CD8-positive, alpha-beta T cell (primary cell): ENCODE measurements at regions of chr14 and their contacts with region 1.

Region 1: DNA sequence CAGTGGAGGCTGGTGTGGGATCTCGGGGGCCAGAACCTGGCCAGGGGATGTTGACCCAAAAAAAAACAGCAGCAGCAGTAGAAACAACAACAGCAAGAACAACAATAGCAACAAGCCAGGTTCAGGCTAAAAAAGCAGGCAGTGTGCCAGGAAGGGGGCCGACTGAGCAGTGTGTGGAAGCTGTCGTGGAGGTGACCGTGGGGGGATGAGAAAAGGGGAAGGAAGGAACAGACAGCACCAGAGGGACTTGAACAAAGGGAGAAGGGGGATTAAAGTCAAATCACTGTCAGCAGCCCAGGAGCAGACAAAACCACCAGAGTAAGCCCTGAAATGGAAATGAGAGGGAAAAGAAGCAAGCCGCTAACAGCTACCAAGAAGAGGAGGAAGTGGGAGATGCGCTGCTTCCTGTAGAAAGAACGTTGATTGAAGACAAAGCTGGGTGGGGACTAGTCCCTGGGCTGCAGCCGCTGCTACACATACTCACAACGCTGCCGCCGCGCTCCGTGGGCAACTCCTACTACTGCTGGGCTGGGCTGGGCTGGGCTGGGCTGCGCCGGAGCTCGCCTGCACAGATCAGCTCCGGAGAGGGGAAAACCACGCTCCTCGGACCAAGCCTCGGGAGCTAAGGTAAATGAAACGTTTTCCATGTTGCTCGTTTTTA is at the start of gene GNG2:
- DNase-seq: peak; percentile 71 to 94 (median 83)
- ATAC-seq: peak; percentile 95
- H3K4me3 ChIP-seq: peak within 1 kb of the TSS; percentile 86 to 90
- H3K4me3 Mint-ChIP-seq: peak within 1 kb of the TSS; percentile 98
- H3K27ac ChIP-seq: peak within 1 kb of the TSS; percentile 88
- H3K27ac Mint-ChIP-seq: peak within 1 kb of the TSS; percentile 95
- H3K4me1 ChIP-seq: peaks cover 50% of the 10 kb centered on the region
- H3K4me1 Mint-ChIP-seq: peaks cover 66% of the 10 kb centered on the region
- H3K27me3 ChIP-seq: no peaks in the 10 kb centered on the region
- H3K27me3 Mint-ChIP-seq: no peaks in the 10 kb centered on the region
- CTCF ChIP-seq: no peak
- total RNA-seq, gene GNG2: 166 to 169 TPM

Region 2: DNA sequence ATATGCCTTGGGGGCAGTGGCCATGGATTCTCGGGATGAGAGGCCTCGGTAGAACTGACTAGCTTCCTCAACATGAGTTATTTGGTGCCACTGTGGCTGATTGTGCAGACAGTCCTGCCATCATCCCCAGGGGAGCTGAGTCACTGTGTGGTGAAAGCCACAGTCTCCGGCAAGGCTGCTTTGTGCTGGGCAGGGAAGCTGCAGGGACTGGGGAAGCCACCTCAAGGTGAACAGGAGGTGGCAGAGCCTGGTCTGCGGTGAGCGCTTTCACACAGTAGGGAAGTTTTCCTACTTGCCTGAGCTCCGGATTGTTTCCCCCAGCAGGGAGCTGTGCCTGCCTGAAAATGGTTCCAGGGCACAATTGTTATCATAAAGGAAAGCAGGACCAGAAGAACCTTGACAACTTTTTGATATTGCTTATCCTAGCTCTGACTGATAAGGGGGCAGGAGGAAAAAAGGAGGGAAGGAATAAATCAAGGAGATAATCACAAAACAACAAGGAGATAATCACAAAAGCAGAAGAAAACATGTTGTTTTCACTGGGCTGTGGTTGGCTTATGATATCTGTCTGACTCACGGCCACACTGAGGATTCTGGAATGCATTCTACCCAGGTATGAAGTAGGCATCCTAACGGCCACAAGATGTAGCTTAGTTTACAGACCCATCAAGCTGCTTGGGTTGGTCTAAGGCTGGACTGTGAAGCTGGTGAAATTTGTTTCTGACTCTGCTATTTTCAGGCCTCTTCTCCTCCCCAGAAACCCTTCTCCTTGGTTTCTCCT is 32.1 kb before region 1 on chr14:
- CTCF ChIA-PET with region 1: interaction called, 3 read pairs
- POLR2A ChIA-PET with region 1: interaction called, 4 read pairs
- intact Hi-C with region 1: loop called in 1 of 2 experiments (anchors 1 kb)
- DNase-seq: peak; percentile 13 to 81 (median 72)
- ATAC-seq: peak; percentile 97
- H3K4me3 ChIP-seq: no peak overlapping the region
- H3K4me3 Mint-ChIP-seq: no peak overlapping the region
- H3K27ac ChIP-seq: no peak overlapping the region
- H3K27ac Mint-ChIP-seq: no peak overlapping the region
- H3K4me1 ChIP-seq: peaks cover 10% of the 10 kb centered on the region
- H3K4me1 Mint-ChIP-seq: no peaks in the 10 kb centered on the region
- H3K27me3 ChIP-seq: no peaks in the 10 kb centered on the region
- H3K27me3 Mint-ChIP-seq: peaks cover 3% of the 10 kb centered on the region
- CTCF ChIP-seq: no peak

Region 3: GRCh38 chr14:51901475-51902024 is 41.3 kb after region 1 on chr14:
- CTCF ChIA-PET with region 1: no interaction called
- POLR2A ChIA-PET with region 1: interaction called, 5 read pairs
- intact Hi-C with region 1: loop called (anchors 5 kb)
- DNase-seq: peak in 5 of 9 experiments; percentile 14 to 74 (median 50)
- ATAC-seq: peak; percentile 76
- H3K4me3 ChIP-seq: no peak overlapping the region
- H3K4me3 Mint-ChIP-seq: peak overlapping the region; percentile 11
- H3K27ac ChIP-seq: peak overlapping the region in 1 of 2 experiments; percentile 34
- H3K27ac Mint-ChIP-seq: peak overlapping the region; percentile 71
- H3K4me1 ChIP-seq: peaks cover 29% of the 10 kb centered on the region
- H3K4me1 Mint-ChIP-seq: peaks cover 70% of the 10 kb centered on the region
- H3K27me3 ChIP-seq: no peaks in the 10 kb centered on the region
- H3K27me3 Mint-ChIP-seq: no peaks in the 10 kb centered on the region
- CTCF ChIP-seq: no peak